Calu3 (cell line): ENCODE measurements at regions of chrX and their contacts with region 1.

Region 1: GRCh38 chrX:71283403-71284143 is at the start of gene NONO:
- DNase-seq: peak; percentile 90
- H3K4me3 Mint-ChIP-seq: peak within 1 kb of the TSS; percentile 97
- H3K27ac Mint-ChIP-seq: peak within 1 kb of the TSS; percentile 100
- H3K4me1 Mint-ChIP-seq: no peaks in the 10 kb centered on the region
- H3K27me3 Mint-ChIP-seq: peaks cover 10% of the 10 kb centered on the region
- CTCF ChIP-seq: no peak
- total RNA-seq, gene NONO: 520 and 576 TPM in 2 replicates

Region 2: DNA sequence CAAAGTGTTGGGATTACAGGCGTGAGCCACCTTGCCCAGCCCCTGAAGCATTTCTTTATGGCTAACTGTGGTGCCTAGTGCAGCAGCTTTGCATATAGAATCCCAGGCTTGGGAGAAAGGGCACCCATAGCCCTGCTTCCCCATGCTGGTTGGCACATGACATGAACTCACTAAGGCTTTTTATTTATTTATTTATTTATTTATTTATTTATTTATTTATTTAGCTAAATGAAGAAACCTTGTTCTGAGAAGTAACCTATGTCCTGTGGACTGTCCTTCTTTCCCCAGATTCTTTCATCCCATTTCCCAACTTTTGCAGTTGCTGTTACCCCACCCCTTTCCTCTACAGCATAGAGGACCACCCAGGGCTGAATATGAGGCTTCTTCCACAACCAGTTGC is 62.4 kb before region 1 on chrX:
- CTCF ChIA-PET with region 1: no interaction called
- intact Hi-C with region 1: no loop called
- DNase-seq: no peak
- H3K4me3 Mint-ChIP-seq: no peak overlapping the region
- H3K27ac Mint-ChIP-seq: no peak overlapping the region
- H3K4me1 Mint-ChIP-seq: peaks cover 36% of the 10 kb centered on the region
- H3K27me3 Mint-ChIP-seq: no peaks in the 10 kb centered on the region
- CTCF ChIP-seq: no peak

Region 3: DNA sequence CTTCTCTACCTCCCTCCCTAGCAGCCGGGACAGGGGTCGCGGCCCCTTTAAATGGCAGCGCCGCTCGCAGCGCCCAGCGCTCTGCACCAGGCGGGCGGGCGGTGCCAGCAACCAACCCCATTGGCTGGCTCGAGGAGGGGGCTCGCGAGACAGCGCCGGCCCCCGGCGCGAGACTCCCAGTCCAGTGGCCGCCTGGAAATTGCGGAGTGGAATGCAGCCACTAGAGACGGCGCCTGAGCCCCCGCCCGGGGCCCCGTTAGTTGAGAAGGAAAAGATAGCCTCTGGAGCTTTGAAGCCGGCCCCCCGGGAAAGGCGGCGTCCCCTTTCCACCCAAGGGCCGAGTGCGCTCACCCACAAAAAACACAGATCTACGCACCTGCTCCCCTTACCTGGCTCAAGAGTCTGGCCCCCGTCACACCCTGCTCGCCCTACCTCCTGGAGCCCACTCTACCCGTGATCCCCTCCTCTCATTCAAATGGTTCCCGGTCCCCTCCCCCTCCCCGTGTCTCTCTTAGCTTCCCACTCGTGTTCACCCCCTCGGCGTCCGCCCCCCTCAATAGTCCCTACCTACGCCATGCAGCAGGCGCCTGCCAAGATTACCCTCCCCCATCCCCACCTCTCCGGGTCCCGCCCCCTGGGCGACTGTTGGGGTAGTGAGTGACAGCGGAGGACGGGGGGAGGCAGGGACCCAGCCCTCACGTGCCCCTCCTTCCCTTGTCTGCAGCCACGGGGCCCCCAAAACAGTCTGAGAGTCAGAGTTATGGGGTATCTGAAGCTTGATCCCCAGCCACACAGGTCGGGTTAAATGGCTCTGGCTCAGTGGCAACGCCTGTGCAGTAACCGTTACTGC is 29.3 kb before region 1 on chrX and contains the start of gene ZMYM3:
- CTCF ChIA-PET with region 1: interaction called, 13 read pairs
- intact Hi-C with region 1: no loop called
- DNase-seq: peak; percentile 88
- H3K4me3 Mint-ChIP-seq: peak within 1 kb of the TSS; percentile 70
- H3K27ac Mint-ChIP-seq: peak within 1 kb of the TSS; percentile 13
- H3K4me1 Mint-ChIP-seq: peaks cover 11% of the 10 kb centered on the region
- H3K27me3 Mint-ChIP-seq: no peaks in the 10 kb centered on the region
- CTCF ChIP-seq: no peak
- total RNA-seq, gene ZMYM3: 42.9 and 45.7 TPM in 2 replicates

Region 4: GRCh38 chrX:71420686-71421085 is 137.1 kb after region 1 on chrX:
- CTCF ChIA-PET with region 1: no interaction called
- intact Hi-C with region 1: no loop called
- DNase-seq: no peak
- H3K4me3 Mint-ChIP-seq: no peak overlapping the region
- H3K27ac Mint-ChIP-seq: no peak overlapping the region
- H3K4me1 Mint-ChIP-seq: no peaks in the 10 kb centered on the region
- H3K27me3 Mint-ChIP-seq: no peaks in the 10 kb centered on the region
- CTCF ChIP-seq: no peak

Region 5: DNA sequence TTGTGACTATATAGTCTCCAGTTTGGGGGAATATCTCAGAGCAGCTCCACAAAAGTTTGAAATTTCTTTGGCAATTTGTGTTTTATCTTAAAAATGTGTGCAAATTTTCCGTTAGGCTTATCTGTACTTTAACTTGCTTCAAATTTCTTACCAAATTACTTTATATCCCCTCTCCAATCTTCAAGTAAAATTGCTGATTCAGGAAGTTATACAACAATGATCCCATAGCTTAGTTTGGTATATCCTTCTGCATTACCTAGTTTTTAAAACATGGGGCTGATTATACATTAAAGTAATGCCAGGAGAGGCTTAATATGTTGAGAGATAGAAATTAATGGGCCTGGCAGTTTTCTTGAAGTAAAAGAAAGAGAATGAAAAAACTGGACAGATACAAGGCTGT is 149.2 kb after region 1 on chrX:
- CTCF ChIA-PET with region 1: no interaction called
- intact Hi-C with region 1: no loop called
- DNase-seq: no peak
- H3K4me3 Mint-ChIP-seq: no peak overlapping the region
- H3K27ac Mint-ChIP-seq: no peak overlapping the region
- H3K4me1 Mint-ChIP-seq: no peaks in the 10 kb centered on the region
- H3K27me3 Mint-ChIP-seq: no peaks in the 10 kb centered on the region
- CTCF ChIP-seq: no peak

Region 6: DNA sequence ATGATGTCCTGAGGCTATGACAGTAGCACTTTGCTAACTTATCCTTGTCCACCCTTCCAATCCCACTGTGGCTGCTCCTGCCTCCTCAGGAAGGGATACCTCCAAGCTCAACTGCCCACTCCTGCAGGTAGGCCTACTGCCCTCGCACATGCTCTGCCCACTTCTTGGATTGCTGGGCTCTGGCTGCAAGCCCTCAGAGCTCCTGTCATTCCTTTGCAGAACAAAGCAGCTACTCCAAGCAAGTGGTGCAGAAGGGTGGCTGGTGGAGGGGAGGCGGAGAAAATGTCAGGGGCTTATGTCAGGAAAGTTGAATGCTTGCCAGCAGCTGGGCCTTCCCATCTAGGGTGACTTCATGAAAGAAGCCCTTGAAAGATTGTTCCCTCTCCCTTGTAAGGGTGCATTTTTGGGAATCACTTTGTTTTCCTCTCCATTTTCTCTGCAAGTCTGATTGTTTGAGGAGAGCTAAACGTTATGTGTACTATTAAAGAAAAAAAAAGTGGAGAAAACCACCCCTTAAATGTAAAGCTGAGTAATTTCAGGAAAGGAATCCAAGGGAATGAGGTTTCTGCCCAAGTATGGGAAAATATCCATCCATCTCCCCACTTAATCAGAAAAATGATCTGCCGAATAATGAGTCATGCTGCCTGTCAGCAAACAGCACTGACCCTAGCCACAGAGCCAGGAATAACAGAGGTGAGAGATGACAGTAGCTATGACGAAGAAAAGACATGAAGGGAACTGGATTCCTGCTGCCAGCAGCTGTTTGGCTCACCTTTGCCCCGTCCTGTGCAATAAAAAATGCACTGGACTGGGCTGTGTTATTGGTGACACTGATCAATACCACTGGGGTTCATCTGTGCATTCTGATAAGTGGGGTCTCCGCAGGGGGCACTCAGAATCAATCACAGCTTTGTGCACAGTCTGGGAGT is 746.2 kb after region 1 on chrX:
- CTCF ChIA-PET with region 1: no interaction called
- intact Hi-C with region 1: no loop called
- DNase-seq: peak; percentile 41
- H3K4me3 Mint-ChIP-seq: no peak overlapping the region
- H3K27ac Mint-ChIP-seq: no peak overlapping the region
- H3K4me1 Mint-ChIP-seq: peaks cover 9% of the 10 kb centered on the region
- H3K27me3 Mint-ChIP-seq: peaks cover 12% of the 10 kb centered on the region
- CTCF ChIP-seq: no peak